Activated CD8-positive, alpha-beta T cell treated with anti-CD3 and anti-CD28 coated beads, Interleukin-2, amount 10 ng/mL, durations not matched to agents 7 days and 5 days (primary cell): ENCODE measurements at regions of chr18 and their contacts with region 1.

Region 1: GRCh38 chr18:32072321-32072720 is 19.4 kb upstream of the RNF138 start:
- DNase-seq: peak; percentile 35
- ATAC-seq: no peak
- H3K4me3 Mint-ChIP-seq: no peak overlapping the region
- H3K27ac Mint-ChIP-seq: no peak overlapping the region
- H3K4me1 Mint-ChIP-seq: peaks cover 19% of the 10 kb centered on the region
- H3K27me3 Mint-ChIP-seq: no peaks in the 10 kb centered on the region

Region 2: DNA sequence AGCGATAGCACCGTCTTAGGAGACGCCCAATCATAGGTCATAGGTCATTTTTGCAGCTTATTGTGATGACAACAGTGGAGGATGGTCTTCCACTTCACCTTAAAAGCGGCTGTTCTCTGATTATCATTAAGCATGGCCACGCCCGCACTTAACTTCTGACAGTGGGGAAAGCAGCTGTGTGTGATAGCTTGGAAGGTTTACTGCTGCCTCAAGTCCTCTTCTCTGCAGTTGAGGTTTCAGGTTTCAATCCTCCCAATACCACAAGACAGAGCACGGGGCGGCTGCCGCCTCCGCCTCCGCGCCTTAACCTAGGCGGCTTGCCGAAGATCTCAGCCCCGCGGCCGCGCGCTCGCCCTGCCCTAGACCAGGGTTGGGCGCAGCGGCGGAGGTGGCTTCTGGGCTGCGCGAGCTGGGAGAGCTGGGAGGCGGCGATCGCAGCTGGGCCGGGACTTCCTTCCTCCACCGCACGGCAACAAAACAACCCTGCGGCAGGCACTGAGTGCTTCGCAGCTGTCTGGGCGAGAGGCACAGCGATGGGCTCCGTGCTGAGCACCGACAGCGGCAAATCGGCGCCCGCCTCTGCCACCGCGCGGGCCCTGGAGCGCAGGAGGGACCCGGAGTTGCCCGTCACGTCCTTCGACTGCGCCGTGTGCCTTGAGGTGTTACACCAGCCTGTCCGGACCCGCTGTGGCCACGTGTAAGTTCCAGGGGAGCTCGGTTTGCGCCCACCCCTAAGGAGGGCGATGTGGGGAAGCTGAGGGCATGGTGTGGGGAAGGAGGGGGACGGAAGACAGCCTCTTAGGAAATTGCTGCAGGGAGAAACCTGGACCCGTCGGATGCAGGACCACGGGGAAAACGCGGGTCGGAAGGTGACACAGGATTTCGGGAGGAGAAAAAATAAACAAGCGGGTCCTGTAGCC is 53.7 kb before region 1 on chr18 and contains the start of gene RNF125:
- CTCF ChIA-PET with region 1: interaction called, 38 read pairs
- POLR2A ChIA-PET with region 1: interaction called, 20 read pairs
- DNase-seq: peak; percentile 94
- ATAC-seq: peak; percentile 88
- H3K4me3 Mint-ChIP-seq: peak within 1 kb of the TSS; percentile 100
- H3K27ac Mint-ChIP-seq: peak within 1 kb of the TSS; percentile 99
- H3K4me1 Mint-ChIP-seq: peaks cover 53% of the 10 kb centered on the region
- H3K27me3 Mint-ChIP-seq: no peaks in the 10 kb centered on the region
- total RNA-seq, gene RNF125: 26.5 to 27.9 TPM

Region 3: DNA sequence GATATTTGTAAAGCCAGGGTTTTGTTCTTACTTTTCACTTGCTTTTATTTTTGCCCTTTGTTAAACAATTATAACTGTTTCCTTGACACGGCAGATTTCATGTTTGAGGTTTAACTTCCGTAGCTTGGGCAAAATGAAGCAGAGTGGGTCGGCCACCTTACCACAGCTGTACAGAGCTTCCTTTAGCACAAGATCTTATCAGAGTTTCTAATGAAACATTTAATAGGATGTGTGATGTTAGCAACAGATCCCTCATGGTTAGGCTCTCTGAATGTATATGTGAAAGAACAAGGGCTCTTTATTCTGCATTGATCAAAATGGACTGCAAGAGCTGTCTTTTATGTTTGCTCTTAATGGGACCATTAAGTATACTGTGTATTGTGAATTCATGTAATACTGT is 31.4 kb before region 1 on chr18:
- CTCF ChIA-PET with region 1: interaction called, 19 read pairs
- POLR2A ChIA-PET with region 1: no interaction called
- DNase-seq: peak; percentile 82
- ATAC-seq: peak; percentile 90
- H3K4me3 Mint-ChIP-seq: peak overlapping the region; percentile 65
- H3K27ac Mint-ChIP-seq: peak overlapping the region; percentile 89
- H3K4me1 Mint-ChIP-seq: peaks cover 66% of the 10 kb centered on the region
- H3K27me3 Mint-ChIP-seq: no peaks in the 10 kb centered on the region

Region 4: GRCh38 chr18:32060026-32060425 is 12.3 kb before region 1 on chr18:
- CTCF ChIA-PET with region 1: interaction called, 17 read pairs
- POLR2A ChIA-PET with region 1: interaction called, 4 read pairs
- DNase-seq: no peak
- ATAC-seq: no peak
- H3K4me3 Mint-ChIP-seq: no peak overlapping the region
- H3K27ac Mint-ChIP-seq: peak overlapping the region; percentile 17
- H3K4me1 Mint-ChIP-seq: peaks cover 46% of the 10 kb centered on the region
- H3K27me3 Mint-ChIP-seq: no peaks in the 10 kb centered on the region

Region 5: DNA sequence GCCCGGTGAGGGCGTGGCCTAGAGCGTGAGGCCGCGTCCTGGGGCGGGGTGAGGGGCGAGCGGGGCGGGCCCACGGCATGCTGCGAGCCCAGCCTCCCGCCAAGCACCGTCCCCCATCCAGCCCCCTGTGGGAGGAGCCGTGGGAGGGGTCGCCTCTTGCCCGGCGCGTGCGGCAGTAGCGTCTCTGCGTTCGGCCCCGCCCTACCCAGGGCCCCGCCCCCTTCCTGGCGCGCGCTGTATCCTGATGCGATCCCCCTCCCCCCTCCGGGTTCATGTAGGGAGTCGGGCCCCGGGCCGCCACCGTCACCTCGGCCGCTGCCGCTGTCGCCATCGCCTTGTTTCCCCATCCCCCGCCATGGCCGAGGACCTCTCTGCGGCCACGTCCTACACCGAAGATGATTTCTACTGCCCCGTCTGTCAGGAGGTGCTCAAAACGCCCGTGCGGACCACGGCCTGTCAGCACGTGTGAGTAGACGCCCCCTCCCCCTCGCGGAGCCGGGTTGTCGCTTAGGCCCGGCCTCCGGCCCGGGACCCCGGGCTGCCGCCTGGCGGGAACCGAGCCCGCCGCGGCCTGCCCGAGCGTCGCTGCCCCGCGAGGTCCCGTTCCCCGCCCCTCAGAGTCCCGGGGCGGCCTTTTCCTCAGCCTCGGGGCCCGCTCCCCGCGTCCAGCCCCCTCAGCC is 20.2 kb after region 1 on chr18:
- CTCF ChIA-PET with region 1: interaction called, 14 read pairs
- POLR2A ChIA-PET with region 1: interaction called, 4 read pairs
- DNase-seq: peak; percentile 100
- ATAC-seq: peak; percentile 91
- H3K4me3 Mint-ChIP-seq: peak overlapping the region; percentile 96
- H3K27ac Mint-ChIP-seq: peak overlapping the region; percentile 98
- H3K4me1 Mint-ChIP-seq: peaks cover 50% of the 10 kb centered on the region
- H3K27me3 Mint-ChIP-seq: no peaks in the 10 kb centered on the region